Cardiac septum (tissue), 1 donor: ENCODE measurements at regions of chr11 and their contacts with region 1.

Region 1: DNA sequence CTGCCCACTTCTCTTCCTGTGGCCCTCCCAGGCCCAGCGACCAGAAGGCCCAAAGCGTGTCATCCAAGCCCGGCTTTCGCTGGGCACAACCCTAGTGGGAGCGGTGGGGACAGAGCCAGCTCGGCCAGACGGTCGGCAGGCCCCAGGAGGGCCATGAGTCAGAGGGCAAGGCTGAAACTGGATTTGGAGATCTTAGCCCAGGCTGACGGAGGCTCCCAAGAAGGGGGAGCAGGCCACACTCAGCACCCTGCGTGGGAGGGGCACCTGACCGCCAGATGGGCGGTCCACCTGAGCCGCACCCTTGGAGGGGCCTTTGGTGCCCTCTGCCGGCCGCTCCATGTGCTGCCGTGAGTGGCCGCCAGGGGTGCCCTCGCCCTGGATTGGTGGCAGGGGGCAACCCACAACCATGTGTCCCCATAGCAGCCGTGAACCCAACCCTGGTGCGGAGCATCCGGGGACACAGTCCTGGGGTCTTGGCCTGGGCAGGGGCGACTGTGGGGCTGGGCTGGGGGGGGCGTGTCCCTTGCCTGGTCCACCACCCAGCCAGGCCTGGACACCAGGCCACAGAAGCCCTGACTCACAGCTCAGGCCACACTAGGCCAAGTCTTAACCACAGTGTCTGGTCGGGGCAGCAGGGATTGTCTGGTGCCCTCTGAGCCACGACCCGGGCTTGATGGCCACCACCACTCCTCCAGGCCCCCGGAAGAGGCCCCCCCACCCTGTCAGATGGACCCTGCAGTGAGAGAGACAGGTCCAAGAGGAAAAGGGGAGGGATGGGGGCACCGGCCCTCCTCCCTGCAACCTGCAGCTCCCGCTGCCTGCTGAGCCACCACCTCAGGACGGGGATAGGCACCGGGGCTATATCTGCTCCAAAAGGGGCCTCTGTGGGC is 19.2 kb upstream of the TALDO1 start:
- DNase-seq: peak; percentile 92

Region 2: DNA sequence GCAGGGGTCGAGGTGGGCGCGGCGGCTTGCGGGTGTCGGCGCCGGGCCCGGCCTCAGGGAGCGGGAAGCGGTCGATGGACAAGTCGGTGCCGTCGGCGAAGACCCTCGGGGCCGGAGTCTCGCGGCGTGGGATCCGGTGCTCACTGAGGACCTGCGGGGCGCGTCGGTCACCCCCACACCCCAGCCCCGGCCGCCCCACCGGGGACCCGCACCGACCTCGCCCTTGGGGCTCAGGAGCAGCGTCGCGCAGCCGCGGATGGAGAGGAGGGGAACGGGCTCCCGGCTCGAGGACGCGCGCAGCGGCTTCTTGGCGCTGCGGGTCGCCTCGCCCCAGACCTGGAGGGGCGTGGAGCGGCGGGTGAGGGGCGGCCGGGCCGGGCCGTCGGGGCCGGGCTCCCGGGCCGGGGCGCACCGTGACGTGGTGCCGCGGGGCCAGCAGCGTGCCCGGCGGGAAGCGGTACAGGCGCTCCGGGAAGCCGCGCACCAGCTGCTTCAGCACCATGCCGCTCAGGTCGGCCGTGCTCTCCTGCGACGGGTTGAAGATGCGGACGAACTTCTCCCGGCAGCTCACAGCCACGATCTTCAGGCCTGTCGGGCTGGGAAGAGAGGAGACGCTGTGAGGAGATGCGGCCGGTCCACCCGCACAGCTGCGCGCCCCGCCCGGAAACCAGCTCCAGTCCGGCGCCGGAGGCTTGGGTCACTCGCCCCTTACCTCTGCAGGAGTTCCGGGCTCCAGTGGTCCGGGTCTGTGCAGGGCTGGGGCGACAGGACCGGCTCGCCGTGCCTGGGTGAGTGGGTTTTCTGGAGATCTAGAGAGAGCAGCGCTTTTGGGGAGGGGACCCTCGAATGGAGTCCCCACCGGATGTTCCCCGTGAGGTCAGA is 172.1 kb before region 1 on chr11:
- intact Hi-C with region 1: loop called (anchors 2 kb)
- DNase-seq: no peak

Region 3: GRCh38 chr11:662689-663274 is 65.3 kb before region 1 on chr11:
- intact Hi-C with region 1: loop called (anchors 2 kb)
- DNase-seq: no peak